ENCODE measurements at regions of chr6 and their contacts with region 1.

Region 1: GRCh38 chr6:85015396-85015990 is 251.1 kb upstream of the TBX18 start:
- DNase-seq: peak; percentile 83
- H3K4me3 ChIP-seq: no peak overlapping the region
- H3K27ac ChIP-seq: no peak overlapping the region
- H3K4me1 ChIP-seq: no peaks in the 10 kb centered on the region
- H3K27me3 ChIP-seq: peaks cover 9% of the 10 kb centered on the region in 2 experiments
- CTCF ChIP-seq: peak; percentile 80 to 82
- POLR2A ChIP-seq: no peak

Region 2: DNA sequence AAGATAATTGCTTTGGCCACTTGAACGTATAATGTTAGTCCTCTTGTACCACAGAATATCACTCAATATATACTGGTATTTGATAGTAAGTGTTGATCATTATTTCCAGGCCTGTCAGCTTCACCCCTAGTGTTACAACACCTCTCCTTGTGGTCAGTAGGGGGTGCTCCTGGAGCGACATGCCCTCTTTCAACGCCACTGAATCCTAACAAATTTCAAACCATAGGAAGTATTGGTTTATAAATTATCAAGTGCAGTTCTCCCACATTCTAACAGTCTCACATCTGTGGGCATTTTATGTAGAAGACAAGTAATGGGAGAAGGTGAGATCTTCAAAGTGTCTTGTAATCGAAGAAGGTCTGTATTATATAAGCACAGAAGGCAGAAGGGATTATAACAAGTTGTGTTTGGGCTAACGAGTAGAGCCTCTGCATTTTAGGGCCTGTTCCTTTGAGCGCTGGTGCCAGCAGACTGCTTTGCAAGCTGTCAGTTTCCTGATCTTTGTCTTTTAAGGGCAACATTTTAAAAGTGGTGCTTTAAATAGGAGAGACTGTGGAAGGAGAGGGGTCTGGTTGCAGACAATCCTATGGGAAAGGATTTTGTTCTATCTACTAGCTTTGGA is 731.0 kb before region 1 on chr6:
- CTCF ChIA-PET with region 1: interaction called, 3 read pairs
- POLR2A ChIA-PET with region 1: no interaction called
- dilution Hi-C with region 1: no loop called
- intact Hi-C with region 1: loop called (anchors 1 kb)
- DNase-seq: peak; percentile 41
- H3K4me3 ChIP-seq: no peak overlapping the region
- H3K27ac ChIP-seq: no peak overlapping the region
- H3K4me1 ChIP-seq: no peaks in the 10 kb centered on the region
- H3K27me3 ChIP-seq: peaks cover 6 to 13% of the 10 kb centered on the region in 2 experiments
- CTCF ChIP-seq: peak; percentile 37 to 53
- POLR2A ChIP-seq: no peak

Region 3: GRCh38 chr6:84486526-84486925 is 529.0 kb before region 1 on chr6:
- CTCF ChIA-PET with region 1: no interaction called
- POLR2A ChIA-PET with region 1: no interaction called
- dilution Hi-C with region 1: no loop called
- intact Hi-C with region 1: no loop called
- DNase-seq: peak; percentile 59
- H3K4me3 ChIP-seq: no peak overlapping the region
- H3K27ac ChIP-seq: no peak overlapping the region
- H3K4me1 ChIP-seq: peaks cover 9% of the 10 kb centered on the region
- H3K27me3 ChIP-seq: no peaks in the 10 kb centered on the region
- CTCF ChIP-seq: no peak
- POLR2A ChIP-seq: no peak

Region 4: DNA sequence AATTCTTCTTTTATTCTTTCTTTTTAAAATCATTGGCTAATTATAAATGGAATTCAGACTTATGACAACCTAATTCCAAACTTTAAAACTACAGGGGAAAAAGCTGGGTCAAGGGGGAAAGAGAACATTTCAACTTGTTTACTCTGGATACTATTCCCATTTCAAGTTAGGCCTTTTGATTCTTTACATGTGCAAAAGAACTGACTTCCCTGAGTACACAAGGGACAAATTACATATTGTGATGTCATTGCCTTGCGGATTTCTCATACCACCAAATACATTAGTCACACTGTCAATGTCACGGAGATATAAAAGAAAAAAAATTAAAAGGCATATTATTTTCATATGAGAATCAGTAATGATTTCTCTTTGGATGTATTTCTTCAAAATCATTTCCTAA is 154.6 kb before region 1 on chr6:
- CTCF ChIA-PET with region 1: no interaction called
- POLR2A ChIA-PET with region 1: no interaction called
- dilution Hi-C with region 1: no loop called
- intact Hi-C with region 1: loop called (anchors 5 kb)
- DNase-seq: no peak
- H3K4me3 ChIP-seq: no peak overlapping the region
- H3K27ac ChIP-seq: no peak overlapping the region
- H3K4me1 ChIP-seq: no peaks in the 10 kb centered on the region
- H3K27me3 ChIP-seq: peaks cover 0 to 13% of the 10 kb centered on the region in 2 experiments
- CTCF ChIP-seq: no peak
- POLR2A ChIP-seq: no peak

Region 5: DNA sequence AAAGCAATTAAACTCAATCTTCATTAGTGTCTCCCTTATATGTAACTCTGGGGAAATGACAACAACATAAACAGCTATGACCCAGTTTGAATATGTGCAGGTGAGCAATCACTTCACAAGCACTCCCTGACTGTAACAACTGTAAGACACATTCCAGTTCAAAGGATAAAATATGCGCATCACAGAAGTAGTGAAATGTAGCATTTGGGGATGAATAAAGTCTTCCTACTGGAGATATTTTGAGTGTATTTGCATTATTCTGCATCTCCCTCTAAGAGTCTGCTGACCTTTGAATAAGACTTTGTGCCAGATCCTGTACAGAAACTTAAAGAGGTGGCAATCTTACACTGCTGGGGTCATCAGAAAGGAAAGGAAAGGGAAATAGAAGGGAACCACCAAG is 71.6 kb before region 1 on chr6:
- CTCF ChIA-PET with region 1: no interaction called
- POLR2A ChIA-PET with region 1: no interaction called
- dilution Hi-C with region 1: no loop called
- intact Hi-C with region 1: no loop called
- DNase-seq: no peak
- H3K4me3 ChIP-seq: no peak overlapping the region
- H3K27ac ChIP-seq: no peak overlapping the region
- H3K4me1 ChIP-seq: no peaks in the 10 kb centered on the region
- H3K27me3 ChIP-seq: peaks cover 0 to 4% of the 10 kb centered on the region in 2 experiments
- CTCF ChIP-seq: no peak
- POLR2A ChIP-seq: no peak

Region 6: DNA sequence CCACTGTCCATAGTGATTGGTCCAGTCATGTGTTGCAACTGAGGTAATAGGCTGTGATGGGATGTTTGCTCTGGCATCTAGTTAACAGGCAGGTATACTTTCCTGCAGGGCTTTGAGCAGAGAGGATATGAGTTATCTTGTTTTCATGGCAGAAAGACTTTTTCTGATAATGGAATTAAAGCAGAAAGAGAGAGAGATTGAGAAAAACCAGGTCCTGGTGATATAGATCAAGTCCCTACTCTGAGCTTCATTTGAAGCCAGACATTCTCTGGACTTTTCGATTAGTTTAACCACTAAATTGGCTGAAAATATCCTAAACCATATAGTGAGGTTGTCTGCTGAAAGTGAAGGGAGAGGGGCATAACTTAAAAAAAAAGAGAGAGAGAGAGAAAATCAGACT is 17.3 kb before region 1 on chr6:
- CTCF ChIA-PET with region 1: interaction called, 10 read pairs
- POLR2A ChIA-PET with region 1: no interaction called
- dilution Hi-C with region 1: no loop called
- intact Hi-C with region 1: no loop called
- DNase-seq: no peak
- H3K4me3 ChIP-seq: no peak overlapping the region
- H3K27ac ChIP-seq: no peak overlapping the region
- H3K4me1 ChIP-seq: no peaks in the 10 kb centered on the region
- H3K27me3 ChIP-seq: peaks cover 0 to 3% of the 10 kb centered on the region in 2 experiments
- CTCF ChIP-seq: no peak
- POLR2A ChIP-seq: no peak

Region 7: GRCh38 chr6:85041376-85041775 is 25.9 kb after region 1 on chr6:
- CTCF ChIA-PET with region 1: no interaction called
- POLR2A ChIA-PET with region 1: no interaction called
- dilution Hi-C with region 1: no loop called
- intact Hi-C with region 1: no loop called
- DNase-seq: peak; percentile 86
- H3K4me3 ChIP-seq: no peak overlapping the region
- H3K27ac ChIP-seq: no peak overlapping the region
- H3K4me1 ChIP-seq: peaks cover 11% of the 10 kb centered on the region
- H3K27me3 ChIP-seq: peaks cover 0 to 1% of the 10 kb centered on the region in 2 experiments
- CTCF ChIP-seq: no peak
- POLR2A ChIP-seq: no peak

Region 8: DNA sequence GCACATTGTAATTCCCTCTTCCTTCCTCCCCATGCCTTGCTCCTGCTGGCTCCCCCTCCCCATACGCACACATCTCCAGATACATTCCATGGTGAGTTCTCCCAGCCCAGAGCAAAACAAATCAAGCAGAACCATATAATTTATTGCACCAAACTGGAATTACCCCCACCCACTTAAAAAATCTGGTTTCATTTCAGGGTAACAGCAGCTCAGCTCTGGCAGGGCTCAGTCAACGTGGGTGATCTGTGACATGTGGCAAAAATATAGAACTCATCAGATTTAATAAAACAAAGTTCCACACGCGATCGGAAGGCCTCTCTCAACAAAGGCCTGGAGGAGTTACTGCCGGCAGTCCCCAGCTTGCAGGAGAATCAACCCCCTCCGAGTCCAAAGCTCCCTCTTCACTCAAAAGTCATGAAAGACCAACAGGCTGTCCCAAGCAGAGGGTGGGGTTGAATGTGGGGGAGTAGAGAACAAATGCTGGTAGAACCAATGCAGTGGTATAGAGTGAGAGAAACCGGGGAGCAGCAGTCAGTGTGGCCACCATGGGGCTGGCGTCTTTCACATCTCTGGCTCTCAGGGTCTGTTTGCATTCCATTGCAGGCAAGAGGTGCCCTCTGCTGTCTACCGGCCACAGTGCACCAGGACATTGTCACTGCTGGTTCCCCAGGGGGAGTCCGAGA is 111.1 kb after region 1 on chr6:
- CTCF ChIA-PET with region 1: interaction called, 6 read pairs
- POLR2A ChIA-PET with region 1: no interaction called
- dilution Hi-C with region 1: no loop called
- intact Hi-C with region 1: loop called (anchors 1 kb)
- DNase-seq: peak; percentile 75
- H3K4me3 ChIP-seq: no peak overlapping the region
- H3K27ac ChIP-seq: no peak overlapping the region
- H3K4me1 ChIP-seq: no peaks in the 10 kb centered on the region
- H3K27me3 ChIP-seq: peaks cover 14 to 17% of the 10 kb centered on the region in 2 experiments
- CTCF ChIP-seq: peak; percentile 72 to 89
- POLR2A ChIP-seq: no peak